GM12878 (cell line): ENCODE measurements at regions of chr10 and their contacts with region 1.

Region 1: GRCh38 chr10:69101451-69102095 is 13.7 kb downstream of the SRGN start:
- DNase-seq: no peak
- ATAC-seq: peak; percentile 7
- H3K4me3 ChIP-seq: no peak overlapping the region
- H3K27ac ChIP-seq: no peak overlapping the region
- H3K4me1 ChIP-seq: peaks cover 14% of the 10 kb centered on the region
- H3K27me3 ChIP-seq: no peaks in the 10 kb centered on the region
- CTCF ChIP-seq: no peak
- EP300 ChIP-seq: no peak
- POLR2A ChIP-seq: no peak
- RAD21 ChIP-seq: no peak

Region 2: GRCh38 chr10:68837608-68838322 is 263.8 kb before region 1 on chr10:
- CTCF ChIA-PET with region 1: no interaction called
- POLR2A ChIA-PET with region 1: no interaction called
- RAD21 ChIA-PET with region 1: no interaction called
- SMC1A ChIA-PET with region 1: no interaction called
- in situ Hi-C with region 1: no loop called
- intact Hi-C with region 1: no loop called
- DNase-seq: no peak
- ATAC-seq: no peak
- H3K4me3 ChIP-seq: no peak overlapping the region
- H3K27ac ChIP-seq: no peak overlapping the region
- H3K4me1 ChIP-seq: no peaks in the 10 kb centered on the region
- H3K27me3 ChIP-seq: no peaks in the 10 kb centered on the region
- CTCF ChIP-seq: no peak
- EP300 ChIP-seq: no peak
- POLR2A ChIP-seq: no peak
- RAD21 ChIP-seq: no peak

Region 3: GRCh38 chr10:69067189-69067588 is 34.4 kb before region 1 on chr10:
- CTCF ChIA-PET with region 1: no interaction called
- POLR2A ChIA-PET with region 1: interaction called, 81 read pairs
- RAD21 ChIA-PET with region 1: interaction called, 544 read pairs
- SMC1A ChIA-PET with region 1: interaction called, 76 read pairs
- in situ Hi-C with region 1: no loop called
- intact Hi-C with region 1: no loop called
- DNase-seq: no peak
- ATAC-seq: no peak
- H3K4me3 ChIP-seq: no peak overlapping the region
- H3K27ac ChIP-seq: no peak overlapping the region
- H3K4me1 ChIP-seq: peaks cover 20% of the 10 kb centered on the region
- H3K27me3 ChIP-seq: no peaks in the 10 kb centered on the region
- CTCF ChIP-seq: no peak
- EP300 ChIP-seq: no peak
- POLR2A ChIP-seq: no peak
- RAD21 ChIP-seq: no peak

Region 4: DNA sequence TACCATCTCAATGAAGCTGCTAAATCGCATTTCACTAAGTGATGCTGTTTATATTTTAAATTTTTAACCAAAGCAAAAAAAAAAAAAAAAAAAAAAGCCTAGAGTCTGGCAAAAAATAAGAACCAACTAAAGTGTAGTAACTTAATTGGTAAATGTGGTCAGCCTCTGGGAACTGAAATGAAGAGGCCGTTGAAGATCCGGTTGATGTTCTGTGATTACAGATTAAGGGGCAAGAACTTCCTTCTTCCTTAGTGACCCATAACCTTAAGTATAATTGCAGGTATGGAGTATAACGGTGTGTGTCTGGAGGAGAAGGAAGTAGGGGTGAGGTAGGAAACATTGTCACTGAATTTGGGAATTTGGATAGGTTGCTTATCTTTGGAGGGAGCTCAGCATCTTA is 21.3 kb before region 1 on chr10:
- CTCF ChIA-PET with region 1: no interaction called
- POLR2A ChIA-PET with region 1: no interaction called
- RAD21 ChIA-PET with region 1: no interaction called
- SMC1A ChIA-PET with region 1: no interaction called
- in situ Hi-C with region 1: no loop called
- intact Hi-C with region 1: no loop called
- DNase-seq: no peak
- ATAC-seq: no peak
- H3K4me3 ChIP-seq: no peak overlapping the region
- H3K27ac ChIP-seq: no peak overlapping the region
- H3K4me1 ChIP-seq: peaks cover 1% of the 10 kb centered on the region; the same call in 1 of the 2 replicates
- H3K27me3 ChIP-seq: no peaks in the 10 kb centered on the region
- CTCF ChIP-seq: no peak
- EP300 ChIP-seq: no peak
- POLR2A ChIP-seq: no peak
- RAD21 ChIP-seq: no peak